ENCODE measurements at regions of chr9 and their contacts with region 1.

Region 1: DNA sequence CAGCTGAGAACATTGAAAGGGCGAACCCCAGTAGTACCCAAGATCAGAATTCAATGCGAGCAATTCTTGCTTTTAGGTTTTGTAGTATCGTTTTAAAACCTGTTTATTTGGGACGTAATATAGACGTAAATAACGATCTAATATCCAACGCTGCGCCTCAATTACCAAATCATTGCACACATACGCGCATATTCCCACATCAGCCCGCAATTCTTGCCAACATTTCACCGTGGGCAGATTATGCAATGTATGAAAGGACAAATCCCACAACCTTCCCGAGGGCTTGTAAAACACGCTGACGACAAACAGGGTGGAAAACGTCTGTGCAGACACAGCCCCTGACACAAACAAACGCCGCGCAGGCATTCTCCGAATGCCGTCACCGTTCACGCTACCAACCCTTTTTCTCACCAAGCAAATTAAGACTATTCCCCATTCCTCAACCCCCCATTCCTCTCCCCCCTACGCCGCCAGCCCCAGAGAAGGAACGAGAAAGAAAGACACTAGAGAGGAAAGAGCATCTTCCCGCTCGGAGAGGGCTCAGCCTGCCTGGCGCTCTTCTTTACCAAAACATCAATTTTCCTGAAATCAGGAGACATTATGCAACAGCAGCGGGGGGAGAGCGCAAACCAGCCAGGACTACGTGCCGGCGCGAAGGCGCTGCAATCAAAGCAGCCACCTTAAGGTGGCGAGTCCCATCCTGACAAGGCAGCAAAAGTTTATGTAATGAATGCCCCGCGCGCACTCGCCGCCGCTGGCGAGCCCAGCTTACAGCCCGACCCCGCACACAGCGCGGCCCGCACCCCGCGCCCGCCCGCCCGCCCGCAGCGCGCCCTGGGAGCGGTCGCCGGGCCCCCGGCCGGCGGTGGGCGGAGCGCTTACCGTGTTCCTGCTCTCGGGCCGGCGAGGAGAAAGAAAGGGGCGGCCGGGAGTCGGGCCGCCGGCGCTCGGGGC is 597 bp downstream of the NFIL3 start:
- H3K4me3 Mint-ChIP-seq: peak overlapping the region; percentile 92
- H3K27ac Mint-ChIP-seq: peak overlapping the region; percentile 96
- H3K4me1 Mint-ChIP-seq: peaks cover 50% of the 10 kb centered on the region
- H3K27me3 Mint-ChIP-seq: no peaks in the 10 kb centered on the region

Region 2: GRCh38 chr9:91036826-91037510 is 386.1 kb before region 1 on chr9:
- intact Hi-C with region 1: loop called (anchors 2 kb)
- H3K4me3 Mint-ChIP-seq: peak overlapping the region; percentile 46
- H3K27ac Mint-ChIP-seq: peak overlapping the region; percentile 52
- H3K4me1 Mint-ChIP-seq: peaks cover 53% of the 10 kb centered on the region
- H3K27me3 Mint-ChIP-seq: peaks cover 23% of the 10 kb centered on the region

Region 3: GRCh38 chr9:91150998-91151717 is 271.9 kb before region 1 on chr9:
- intact Hi-C with region 1: loop called (anchors 5 kb)
- H3K4me3 Mint-ChIP-seq: no peak overlapping the region
- H3K27ac Mint-ChIP-seq: peak overlapping the region; percentile 93
- H3K4me1 Mint-ChIP-seq: peaks cover 71% of the 10 kb centered on the region
- H3K27me3 Mint-ChIP-seq: no peaks in the 10 kb centered on the region

Region 4: GRCh38 chr9:91258451-91258850 is 164.6 kb before region 1 on chr9:
- intact Hi-C with region 1: loop called (anchors 2 kb)
- H3K4me3 Mint-ChIP-seq: peak overlapping the region; percentile 48
- H3K27ac Mint-ChIP-seq: peak overlapping the region; percentile 91
- H3K4me1 Mint-ChIP-seq: peaks cover 54% of the 10 kb centered on the region
- H3K27me3 Mint-ChIP-seq: no peaks in the 10 kb centered on the region

Region 5: GRCh38 chr9:91374939-91375338 is 48.1 kb before region 1 on chr9:
- intact Hi-C with region 1: no loop called
- H3K4me3 Mint-ChIP-seq: no peak overlapping the region
- H3K27ac Mint-ChIP-seq: no peak overlapping the region
- H3K4me1 Mint-ChIP-seq: peaks cover 9% of the 10 kb centered on the region
- H3K27me3 Mint-ChIP-seq: no peaks in the 10 kb centered on the region

Region 6: DNA sequence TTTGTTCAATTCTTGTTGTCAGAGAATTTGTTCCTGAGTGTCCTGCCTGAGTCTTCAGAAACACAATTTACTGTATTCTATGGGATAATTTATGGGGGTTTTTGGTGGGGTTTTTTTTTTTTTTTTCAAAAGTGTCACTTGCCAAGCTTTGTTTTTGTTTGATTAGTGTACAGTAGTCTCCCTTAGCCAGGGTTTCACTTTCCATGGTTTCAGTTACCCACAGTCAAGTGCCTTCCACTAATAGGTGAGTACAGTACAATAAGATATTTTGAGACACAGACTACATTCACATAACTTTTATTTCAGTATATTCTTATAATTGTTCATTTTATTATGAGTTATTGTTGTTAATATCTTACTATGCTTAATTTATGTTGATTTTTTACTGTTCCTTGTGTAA is 36.3 kb before region 1 on chr9:
- intact Hi-C with region 1: no loop called
- H3K4me3 Mint-ChIP-seq: no peak overlapping the region
- H3K27ac Mint-ChIP-seq: no peak overlapping the region
- H3K4me1 Mint-ChIP-seq: peaks cover 6% of the 10 kb centered on the region
- H3K27me3 Mint-ChIP-seq: no peaks in the 10 kb centered on the region

Measured in dendritic cell treated with granulocyte-macrophage colony-stimulating factor and Interleukin-4, amounts not matched to agents 40 ng/mL and 50 ng/mL, for 4 days (primary cell).